ENCODE measurements at regions of chr1 and their contacts with region 1.

Region 1: GRCh38 chr1:59947047-59947938 is 20.7 kb upstream of the CYP2J2 start:
- DNase-seq: peak in 9 of 10 donors; percentile 30 to 94 (median 67)

Region 2: GRCh38 chr1:59880735-59881134 is 66.6 kb before region 1 on chr1:
- intact Hi-C with region 1: loop called (anchors 1 kb)
- DNase-seq: peak in 1 of 10 donors; percentile 13

Region 3: DNA sequence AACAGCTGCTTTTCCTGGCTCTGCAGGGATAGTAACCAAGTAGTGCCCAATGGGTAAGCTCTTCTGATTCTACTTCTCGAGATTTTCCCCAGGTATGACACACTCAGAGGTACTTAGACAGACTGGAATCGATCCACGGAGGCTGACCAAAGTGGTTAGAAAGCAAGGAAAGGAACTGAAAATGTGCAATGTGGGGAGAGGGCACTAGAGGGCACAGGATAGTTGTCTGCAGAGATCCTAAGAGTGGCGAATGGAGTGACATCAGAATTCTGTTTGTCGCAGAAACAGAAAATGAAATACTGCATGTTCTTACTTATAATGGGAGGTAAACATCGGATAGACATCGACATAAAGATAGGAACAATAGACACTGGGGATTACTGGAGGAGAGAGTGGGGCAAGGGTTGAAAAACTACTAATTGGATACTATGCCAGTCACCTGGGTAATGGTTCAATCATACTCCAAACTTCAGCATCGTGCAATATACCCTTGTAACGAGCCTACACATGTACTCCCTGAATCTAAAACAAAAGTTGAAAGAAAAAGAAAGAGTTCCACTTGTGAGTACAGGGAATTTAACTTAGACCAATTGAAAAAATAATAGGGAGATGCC is 44.0 kb before region 1 on chr1:
- intact Hi-C with region 1: loop called (anchors 1 kb)
- DNase-seq: peak in 4 of 10 donors; percentile 24 to 64 (median 44)

Region 4: DNA sequence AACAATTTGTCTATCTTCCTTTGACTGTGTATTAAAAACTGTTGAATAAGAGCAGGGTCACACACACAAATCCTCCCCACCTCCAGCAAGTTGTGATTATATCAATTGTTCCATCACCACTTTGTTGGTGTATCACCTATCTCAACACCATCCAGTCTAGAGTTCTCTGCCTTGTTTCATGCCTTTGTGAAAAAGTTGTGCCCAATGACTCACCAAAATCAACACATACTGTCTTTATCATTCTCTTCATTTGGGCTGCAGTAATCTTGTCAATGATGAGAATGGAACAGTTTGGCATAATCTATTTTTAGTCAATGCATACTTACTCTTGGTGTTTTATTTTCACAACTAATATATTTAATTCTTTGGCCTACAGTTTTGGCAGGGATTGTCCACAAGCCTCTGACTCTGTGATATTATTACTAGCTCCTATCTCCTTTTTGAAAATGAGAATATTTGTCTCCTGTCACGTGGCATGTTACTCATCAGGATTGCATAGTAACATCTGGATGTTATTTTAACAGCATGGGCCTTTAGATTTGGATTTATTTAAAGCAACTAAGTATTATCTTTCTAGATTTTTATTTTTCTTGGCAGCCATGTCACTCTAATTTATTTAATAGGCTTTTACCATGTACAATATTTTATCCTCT is 121.2 kb after region 1 on chr1:
- intact Hi-C with region 1: no loop called
- DNase-seq: no peak